GM12878 (cell line): ENCODE measurements at regions of chr20 and their contacts with region 1.

Region 1: DNA sequence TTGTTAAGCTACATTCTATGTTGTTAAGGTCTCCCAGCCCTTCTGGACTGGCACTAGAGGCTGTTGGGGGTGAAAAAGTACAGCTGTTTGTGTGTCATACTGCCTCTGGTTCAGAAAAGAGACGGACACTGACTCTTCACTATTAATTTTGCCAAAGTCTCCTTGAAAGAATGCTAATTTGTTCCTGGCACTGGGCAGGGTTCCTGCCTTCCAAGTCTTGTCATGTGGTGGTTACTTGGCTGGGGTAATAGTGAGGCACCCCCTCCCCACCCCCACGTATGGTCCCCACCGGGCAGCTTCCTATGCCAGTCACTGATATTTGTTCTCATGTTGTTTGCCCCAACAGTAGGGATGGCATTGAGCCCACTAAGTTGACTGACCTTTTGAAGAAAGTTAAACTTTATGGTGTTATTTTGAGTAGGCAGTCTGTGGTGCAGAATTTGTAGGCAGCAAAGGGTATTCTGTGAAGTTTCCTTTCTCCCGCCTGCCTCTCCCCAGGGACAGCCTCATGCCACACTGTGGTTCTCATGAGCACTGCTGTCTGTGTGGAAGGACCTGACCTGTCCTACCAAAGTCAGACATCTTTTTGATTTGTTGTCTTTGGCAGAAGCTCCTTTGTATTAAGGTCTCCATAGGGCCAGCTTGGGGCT is 8.7 kb downstream of the CDS2 start:
- DNase-seq: peak; percentile 42
- ATAC-seq: peak; percentile 87
- H3K4me3 ChIP-seq: no peak overlapping the region
- H3K27ac ChIP-seq: no peak overlapping the region; the same call in 1 of the 2 replicates
- H3K4me1 ChIP-seq: peaks cover 2% of the 10 kb centered on the region; the same call in 1 of the 2 replicates
- H3K27me3 ChIP-seq: no peaks in the 10 kb centered on the region
- CTCF ChIP-seq: no peak
- EP300 ChIP-seq: no peak
- POLR2A ChIP-seq: no peak
- RAD21 ChIP-seq: no peak

Region 2: GRCh38 chr20:5119435-5120188 is 15.9 kb before region 1 on chr20 and contains the start of gene PCNA:
- CTCF ChIA-PET with region 1: interaction called, 8 read pairs
- POLR2A ChIA-PET with region 1: interaction called, 6 read pairs
- RAD21 ChIA-PET with region 1: interaction called, 6 read pairs
- SMC1A ChIA-PET with region 1: interaction called, 10 read pairs
- in situ Hi-C with region 1: no loop called
- intact Hi-C with region 1: no loop called
- DNase-seq: peak; percentile 90
- ATAC-seq: peak; percentile 94
- H3K4me3 ChIP-seq: peak within 1 kb of the TSS; percentile 84
- H3K27ac ChIP-seq: peak within 1 kb of the TSS; percentile 94
- H3K4me1 ChIP-seq: peaks cover 4% of the 10 kb centered on the region; the same call in 1 of the 2 replicates
- H3K27me3 ChIP-seq: no peaks in the 10 kb centered on the region
- CTCF ChIP-seq: no peak
- EP300 ChIP-seq: no peak
- POLR2A ChIP-seq: peak; percentile 98
- RAD21 ChIP-seq: no peak
- polyA plus RNA-seq, gene PCNA: 651 to 694 TPM

Region 3: GRCh38 chr20:5168651-5169396 is 33.3 kb after region 1 on chr20:
- CTCF ChIA-PET with region 1: interaction called, 3 read pairs
- POLR2A ChIA-PET with region 1: interaction called, 3 read pairs
- RAD21 ChIA-PET with region 1: interaction called, 3 read pairs
- SMC1A ChIA-PET with region 1: interaction called, 11 read pairs
- in situ Hi-C with region 1: no loop called
- intact Hi-C with region 1: no loop called
- DNase-seq: no peak
- ATAC-seq: peak; percentile 7
- H3K4me3 ChIP-seq: no peak overlapping the region
- H3K27ac ChIP-seq: peak overlapping the region; percentile 27
- H3K4me1 ChIP-seq: peaks cover 56% of the 10 kb centered on the region
- H3K27me3 ChIP-seq: no peaks in the 10 kb centered on the region
- CTCF ChIP-seq: no peak
- EP300 ChIP-seq: no peak
- POLR2A ChIP-seq: no peak
- RAD21 ChIP-seq: no peak

Region 4: GRCh38 chr20:5222919-5223634 is 87.6 kb after region 1 on chr20:
- CTCF ChIA-PET with region 1: interaction called, 10 read pairs
- POLR2A ChIA-PET with region 1: no interaction called
- RAD21 ChIA-PET with region 1: no interaction called
- SMC1A ChIA-PET with region 1: interaction called, 4 read pairs
- in situ Hi-C with region 1: no loop called
- intact Hi-C with region 1: no loop called
- DNase-seq: peak; percentile 13
- ATAC-seq: peak; percentile 92
- H3K4me3 ChIP-seq: no peak overlapping the region
- H3K27ac ChIP-seq: no peak overlapping the region
- H3K4me1 ChIP-seq: no peaks in the 10 kb centered on the region
- H3K27me3 ChIP-seq: no peaks in the 10 kb centered on the region
- CTCF ChIP-seq: peak; percentile 75 to 94 (median 91)
- EP300 ChIP-seq: no peak
- POLR2A ChIP-seq: no peak
- RAD21 ChIP-seq: peak; percentile 75

Region 5: GRCh38 chr20:5261763-5262162 is 126.3 kb after region 1 on chr20:
- CTCF ChIA-PET with region 1: no interaction called
- POLR2A ChIA-PET with region 1: no interaction called
- RAD21 ChIA-PET with region 1: no interaction called
- SMC1A ChIA-PET with region 1: no interaction called
- in situ Hi-C with region 1: no loop called
- intact Hi-C with region 1: no loop called
- DNase-seq: no peak
- ATAC-seq: no peak; the same call in 2 of the 3 replicates
- H3K4me3 ChIP-seq: no peak overlapping the region
- H3K27ac ChIP-seq: no peak overlapping the region
- H3K4me1 ChIP-seq: no peaks in the 10 kb centered on the region
- H3K27me3 ChIP-seq: no peaks in the 10 kb centered on the region; a peak in 2 of 4 replicates
- CTCF ChIP-seq: no peak
- EP300 ChIP-seq: 0 out of 4 replicates have a peak, but pooled peaks of 1 of the 2 experiments have one; percentile 26
- POLR2A ChIP-seq: no peak
- RAD21 ChIP-seq: no peak

Region 6: DNA sequence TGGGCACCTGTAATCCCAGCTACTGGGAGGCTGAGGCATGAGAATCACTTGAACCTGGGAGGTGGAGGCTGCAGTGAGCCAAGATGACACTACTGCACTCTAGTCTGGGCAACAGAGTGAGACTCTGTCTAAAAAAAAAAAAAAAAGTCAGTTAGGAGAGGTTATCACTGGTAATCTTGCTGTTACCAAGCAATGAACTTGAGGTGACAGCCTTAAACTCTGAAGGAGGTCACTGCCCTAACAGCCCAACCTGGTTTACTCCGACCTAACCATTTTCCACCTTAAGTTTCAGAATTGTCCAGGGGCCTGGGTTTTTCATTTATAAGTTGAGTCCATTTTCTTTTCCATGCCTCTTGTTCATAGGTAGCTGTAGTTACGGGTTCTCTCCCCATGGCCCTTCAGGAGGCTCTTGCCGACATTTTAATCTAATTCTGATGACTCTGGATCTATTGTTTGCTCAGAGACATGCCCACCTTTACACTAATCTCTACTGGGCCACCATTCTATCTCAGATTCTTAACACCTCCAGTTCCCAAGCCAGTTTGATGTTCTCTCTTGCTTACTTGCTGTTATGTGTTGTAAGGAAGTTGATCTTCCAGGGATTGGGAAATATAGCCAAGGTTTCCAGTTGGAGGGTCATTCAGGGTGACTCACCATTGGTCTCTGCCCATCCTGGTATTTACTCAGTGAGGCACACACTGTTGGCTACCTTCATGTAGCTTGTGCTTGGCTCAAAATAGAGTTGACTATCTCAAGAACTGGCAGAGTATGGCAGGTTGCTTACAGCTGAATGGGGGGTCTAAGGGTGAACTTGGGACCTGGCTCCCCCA is 643.8 kb after region 1 on chr20:
- CTCF ChIA-PET with region 1: no interaction called
- POLR2A ChIA-PET with region 1: no interaction called
- RAD21 ChIA-PET with region 1: no interaction called
- SMC1A ChIA-PET with region 1: no interaction called
- in situ Hi-C with region 1: no loop called
- intact Hi-C with region 1: no loop called
- DNase-seq: no peak
- ATAC-seq: no peak
- H3K4me3 ChIP-seq: no peak overlapping the region
- H3K27ac ChIP-seq: no peak overlapping the region
- H3K4me1 ChIP-seq: peaks cover 7% of the 10 kb centered on the region
- H3K27me3 ChIP-seq: no peaks in the 10 kb centered on the region
- CTCF ChIP-seq: no peak
- EP300 ChIP-seq: no peak
- POLR2A ChIP-seq: no peak
- RAD21 ChIP-seq: no peak